ENCODE measurements at regions of chr3 and their contacts with region 1.

Region 1: GRCh38 chr3:151987893-151988292 is 114.5 kb downstream of the SUCNR1 start:
- DNase-seq: no peak
- H3K4me3 ChIP-seq: no peak overlapping the region
- H3K27ac ChIP-seq: no peak overlapping the region
- H3K4me1 ChIP-seq: no peaks in the 10 kb centered on the region
- H3K27me3 ChIP-seq: no peaks in the 10 kb centered on the region
- CTCF ChIP-seq: no peak
- POLR2A ChIP-seq: no peak

Region 2: GRCh38 chr3:152011812-152012735 is 24.2 kb after region 1 on chr3:
- CTCF ChIA-PET with region 1: no interaction called
- POLR2A ChIA-PET with region 1: no interaction called
- dilution Hi-C with region 1: no loop called
- intact Hi-C with region 1: loop called (anchors 2 kb)
- DNase-seq: no peak
- H3K4me3 ChIP-seq: no peak overlapping the region
- H3K27ac ChIP-seq: no peak overlapping the region
- H3K4me1 ChIP-seq: no peaks in the 10 kb centered on the region
- H3K27me3 ChIP-seq: no peaks in the 10 kb centered on the region
- CTCF ChIP-seq: no peak
- POLR2A ChIP-seq: no peak

Region 3: GRCh38 chr3:152087153-152087552 is 99.3 kb after region 1 on chr3:
- CTCF ChIA-PET with region 1: no interaction called
- POLR2A ChIA-PET with region 1: no interaction called
- dilution Hi-C with region 1: no loop called
- intact Hi-C with region 1: no loop called
- DNase-seq: no peak
- H3K4me3 ChIP-seq: no peak overlapping the region
- H3K27ac ChIP-seq: no peak overlapping the region
- H3K4me1 ChIP-seq: no peaks in the 10 kb centered on the region
- H3K27me3 ChIP-seq: no peaks in the 10 kb centered on the region
- CTCF ChIP-seq: no peak
- POLR2A ChIP-seq: no peak